B cell (primary cell): ENCODE measurements at regions of chr15 and their contacts with region 1.

Region 1: DNA sequence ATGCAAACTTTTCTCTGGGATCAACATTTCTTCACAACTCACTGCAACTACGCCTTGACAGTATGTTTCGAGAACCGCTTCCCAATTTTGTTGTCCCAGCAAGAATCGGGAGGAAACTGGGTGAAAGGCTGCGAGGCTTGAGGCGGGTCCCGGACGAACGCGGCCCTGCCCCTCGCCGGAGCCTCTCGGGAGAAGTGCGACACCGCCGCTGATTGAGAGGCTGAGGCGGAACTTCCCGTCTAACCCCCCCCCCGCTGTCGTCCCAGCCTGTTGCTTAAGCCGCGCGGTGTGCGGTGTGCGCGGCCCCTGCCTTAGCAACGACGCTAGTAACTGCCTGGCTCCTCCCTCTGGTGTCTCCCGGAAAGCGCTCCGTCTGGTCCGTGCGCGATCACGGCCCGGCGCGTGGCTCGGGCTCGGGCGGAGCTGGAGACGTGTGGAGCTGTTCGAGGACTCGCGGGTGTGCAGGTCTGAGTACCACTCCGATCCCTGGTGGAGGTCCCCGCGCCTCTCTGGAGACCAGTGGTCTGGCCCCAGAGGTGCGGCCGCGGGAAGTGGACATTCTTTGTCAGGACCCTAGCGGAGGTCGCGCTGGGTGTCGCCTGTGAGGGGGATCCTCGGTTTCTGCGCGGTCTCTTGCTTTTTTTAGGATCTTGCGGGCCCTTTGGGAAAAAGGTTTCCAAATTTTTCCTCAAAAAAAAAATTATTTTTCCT is at the starts of genes DTWD1 and FAM227B:
- DNase-seq: peak; percentile 96
- ATAC-seq: peak; percentile 98
- H3K4me3 ChIP-seq: peak within 1 kb of the TSS; percentile 75 to 91 (median 83)
- H3K4me3 Mint-ChIP-seq: peak within 1 kb of the TSS; percentile 93
- H3K27ac ChIP-seq: peak within 1 kb of the TSS; percentile 71 to 95
- H3K27ac Mint-ChIP-seq: peak within 1 kb of the TSS; percentile 96
- H3K4me1 ChIP-seq: peaks cover 11 to 18% of the 10 kb centered on the region in 2 donors
- H3K4me1 Mint-ChIP-seq: peaks cover 22% of the 10 kb centered on the region
- H3K27me3 ChIP-seq: no peaks in the 10 kb centered on the region
- H3K27me3 Mint-ChIP-seq: no peaks in the 10 kb centered on the region
- CTCF ChIP-seq: no peak
- total RNA-seq, gene DTWD1: 27.1 and 27.8 TPM in 2 replicates
- total RNA-seq, gene FAM227B: 8.9 and 9.2 TPM in 2 replicates

Region 2: GRCh38 chr15:48177766-48178647 is 1442.8 kb before region 1 on chr15 and contains the start of gene MYEF2:
- CTCF ChIA-PET with region 1: no interaction called
- POLR2A ChIA-PET with region 1: no interaction called
- intact Hi-C with region 1: loop called (anchors 5 kb)
- DNase-seq: peak; percentile 80
- ATAC-seq: peak; percentile 72
- H3K4me3 ChIP-seq: peak within 1 kb of the TSS; percentile 47 to 71 (median 67)
- H3K4me3 Mint-ChIP-seq: peak within 1 kb of the TSS; percentile 95
- H3K27ac ChIP-seq: peak within 1 kb of the TSS; percentile 21 to 81
- H3K27ac Mint-ChIP-seq: peak within 1 kb of the TSS; percentile 92
- H3K4me1 ChIP-seq: peaks cover 8 to 11% of the 10 kb centered on the region in 2 donors
- H3K4me1 Mint-ChIP-seq: peaks cover 18% of the 10 kb centered on the region
- H3K27me3 ChIP-seq: peaks cover 0 to 5% (median 2%) of the 10 kb centered on the region in 4 experiments
- H3K27me3 Mint-ChIP-seq: peaks cover 17% of the 10 kb centered on the region
- CTCF ChIP-seq: peak; percentile 35
- total RNA-seq, gene MYEF2: 34.3 and 36.3 TPM in 2 replicates

Region 3: GRCh38 chr15:48330855-48331795 is 1289.7 kb before region 1 on chr15 and contains the start of gene DUT:
- CTCF ChIA-PET with region 1: no interaction called
- POLR2A ChIA-PET with region 1: no interaction called
- intact Hi-C with region 1: loop called (anchors 2 kb)
- DNase-seq: peak; percentile 89
- ATAC-seq: peak; percentile 78
- H3K4me3 ChIP-seq: peak within 1 kb of the TSS; percentile 76 to 90 (median 77)
- H3K4me3 Mint-ChIP-seq: peak within 1 kb of the TSS; percentile 94
- H3K27ac ChIP-seq: peak within 1 kb of the TSS; percentile 83 to 90
- H3K27ac Mint-ChIP-seq: peak within 1 kb of the TSS; percentile 95
- H3K4me1 ChIP-seq: peaks cover 15 to 17% of the 10 kb centered on the region in 2 donors
- H3K4me1 Mint-ChIP-seq: peaks cover 25% of the 10 kb centered on the region
- H3K27me3 ChIP-seq: no peaks in the 10 kb centered on the region
- H3K27me3 Mint-ChIP-seq: no peaks in the 10 kb centered on the region
- CTCF ChIP-seq: no peak
- total RNA-seq, gene DUT: 84.7 and 89.8 TPM in 2 replicates

Region 4: DNA sequence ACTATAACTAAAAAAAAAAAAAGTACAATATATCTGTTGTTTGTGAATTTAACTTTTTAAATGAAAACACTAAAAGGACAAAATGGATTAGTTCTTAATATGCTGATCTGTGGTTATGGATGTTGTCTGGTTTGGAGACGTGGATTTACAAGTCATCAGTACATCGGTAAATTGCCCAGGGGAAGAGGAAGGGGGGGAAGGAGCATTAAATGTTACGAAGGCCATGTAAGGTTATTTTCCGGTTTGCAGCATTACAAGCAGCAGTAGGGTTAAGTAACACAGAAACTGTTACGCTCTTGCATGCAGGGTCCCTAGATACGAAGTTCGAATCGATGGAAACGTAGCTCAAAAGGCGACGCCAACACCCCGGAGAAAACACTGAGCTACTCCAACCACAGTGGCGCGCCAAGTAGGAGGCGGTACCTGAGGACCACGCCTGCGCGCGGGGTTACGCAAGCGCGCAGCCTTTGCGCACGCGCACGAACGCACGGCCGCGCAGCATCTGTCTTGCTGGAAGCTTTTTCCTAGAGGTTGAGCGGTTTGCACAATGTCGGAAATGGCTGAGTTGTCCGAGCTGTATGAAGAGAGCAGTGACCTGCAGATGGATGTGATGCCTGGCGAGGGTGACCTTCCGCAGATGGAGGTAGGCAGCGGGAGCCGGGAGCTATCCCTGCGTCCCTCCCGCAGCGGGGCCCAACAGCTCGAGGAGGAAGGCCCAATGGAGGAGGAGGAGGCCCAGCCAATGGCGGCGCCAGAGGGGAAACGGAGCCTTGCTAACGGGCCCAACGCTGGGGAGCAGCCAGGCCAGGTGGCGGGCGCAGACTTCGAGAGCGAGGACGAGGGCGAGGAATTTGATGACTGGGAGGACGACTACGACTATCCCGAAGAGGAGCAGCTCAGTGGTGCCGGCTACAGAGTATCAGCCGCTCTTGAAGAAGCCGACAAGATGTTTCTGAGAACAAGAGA is 742.9 kb before region 1 on chr15 and contains the start of gene EID1:
- CTCF ChIA-PET with region 1: no interaction called
- POLR2A ChIA-PET with region 1: interaction called, 3 read pairs
- intact Hi-C with region 1: loop called (anchors 5 kb)
- DNase-seq: peak; percentile 95
- ATAC-seq: peak; percentile 95
- H3K4me3 ChIP-seq: peak within 1 kb of the TSS; percentile 56 to 91 (median 82)
- H3K4me3 Mint-ChIP-seq: peak within 1 kb of the TSS; percentile 100
- H3K27ac ChIP-seq: peak within 1 kb of the TSS; percentile 79 to 83
- H3K27ac Mint-ChIP-seq: peak within 1 kb of the TSS; percentile 99
- H3K4me1 ChIP-seq: peaks cover 0 to 12% of the 10 kb centered on the region in 2 donors
- H3K4me1 Mint-ChIP-seq: peaks cover 25% of the 10 kb centered on the region
- H3K27me3 ChIP-seq: peaks cover 0 to 4% (median 1%) of the 10 kb centered on the region in 4 experiments
- H3K27me3 Mint-ChIP-seq: peaks cover 8% of the 10 kb centered on the region
- CTCF ChIP-seq: no peak
- total RNA-seq, gene EID1: 56.5 and 62.7 TPM in 2 replicates

Region 5: DNA sequence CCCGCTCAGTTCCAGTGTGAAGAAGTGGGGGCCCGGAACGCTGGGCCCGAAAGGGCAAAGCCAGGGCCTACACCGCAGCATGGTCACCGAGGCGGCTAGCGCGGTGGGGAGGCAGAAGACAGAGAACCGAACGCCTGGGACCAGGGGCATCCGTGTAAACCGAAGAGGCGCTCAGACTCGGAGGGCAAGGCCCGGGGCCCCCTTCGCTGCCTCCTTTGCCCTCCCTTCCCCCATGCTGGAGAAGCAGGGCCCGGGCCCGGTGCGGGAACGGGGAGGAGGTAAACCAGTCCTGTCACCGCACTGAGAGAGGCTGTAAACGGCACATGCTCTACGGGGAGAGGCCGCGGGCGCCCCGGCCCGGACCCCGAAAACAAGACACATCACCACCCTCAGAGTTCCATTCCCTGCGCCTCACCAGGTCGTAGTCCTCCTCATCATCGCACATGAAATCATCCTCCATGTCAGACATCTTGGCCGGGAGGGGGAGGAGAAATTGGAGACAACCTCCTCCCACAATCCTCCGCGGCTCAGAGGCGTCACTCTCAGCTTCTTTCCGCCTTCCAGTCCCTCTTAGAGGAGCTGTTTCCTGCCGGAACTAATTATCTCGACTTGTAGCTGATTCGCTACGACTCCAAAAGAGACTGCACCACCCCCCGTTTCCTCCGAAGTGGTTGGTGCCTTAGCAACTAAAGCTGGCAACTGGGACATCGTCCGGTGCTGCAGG is 465.5 kb before region 1 on chr15 and contains the start of gene COPS2:
- CTCF ChIA-PET with region 1: no interaction called
- POLR2A ChIA-PET with region 1: interaction called, 6 read pairs
- intact Hi-C with region 1: loop called (anchors 1 kb)
- DNase-seq: peak; percentile 97
- ATAC-seq: peak; percentile 93
- H3K4me3 ChIP-seq: peak within 1 kb of the TSS; percentile 80 to 99 (median 90)
- H3K4me3 Mint-ChIP-seq: peak within 1 kb of the TSS; percentile 98
- H3K27ac ChIP-seq: peak within 1 kb of the TSS; percentile 92 to 94
- H3K27ac Mint-ChIP-seq: peak within 1 kb of the TSS; percentile 96
- H3K4me1 ChIP-seq: peaks cover 11 to 25% of the 10 kb centered on the region in 2 donors
- H3K4me1 Mint-ChIP-seq: peaks cover 41% of the 10 kb centered on the region
- H3K27me3 ChIP-seq: no peaks in the 10 kb centered on the region
- H3K27me3 Mint-ChIP-seq: no peaks in the 10 kb centered on the region
- CTCF ChIP-seq: peak; percentile 9
- total RNA-seq, gene COPS2: 44.5 and 47.8 TPM in 2 replicates

Region 6: DNA sequence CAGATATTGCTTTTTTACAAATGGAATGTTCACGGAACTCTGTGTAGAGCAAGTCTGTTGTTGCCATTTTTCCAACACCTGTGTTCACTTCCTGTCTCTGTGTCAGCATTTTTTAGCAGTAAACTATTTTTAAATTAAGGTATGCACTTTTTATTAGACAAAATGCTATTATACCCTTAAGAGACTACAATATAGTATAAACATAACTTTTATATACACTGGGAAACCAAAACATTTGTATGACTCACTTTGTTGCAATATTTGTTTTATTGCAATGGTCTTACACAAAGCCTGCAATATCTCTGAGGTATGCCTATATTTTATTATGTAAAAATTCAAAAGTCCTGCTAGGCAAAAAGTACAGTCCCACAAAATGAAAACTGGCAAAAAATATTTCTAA is 237.5 kb before region 1 on chr15:
- CTCF ChIA-PET with region 1: no interaction called
- POLR2A ChIA-PET with region 1: no interaction called
- intact Hi-C with region 1: no loop called
- DNase-seq: no peak
- ATAC-seq: no peak
- H3K4me3 ChIP-seq: no peak overlapping the region
- H3K4me3 Mint-ChIP-seq: no peak overlapping the region
- H3K27ac ChIP-seq: no peak overlapping the region
- H3K27ac Mint-ChIP-seq: no peak overlapping the region
- H3K4me1 ChIP-seq: no peaks in the 10 kb centered on the region
- H3K4me1 Mint-ChIP-seq: no peaks in the 10 kb centered on the region
- H3K27me3 ChIP-seq: no peaks in the 10 kb centered on the region
- H3K27me3 Mint-ChIP-seq: peaks cover 8% of the 10 kb centered on the region
- CTCF ChIP-seq: no peak

Region 7: GRCh38 chr15:49606580-49606979 is 14.2 kb before region 1 on chr15:
- CTCF ChIA-PET with region 1: no interaction called
- POLR2A ChIA-PET with region 1: no interaction called
- intact Hi-C with region 1: no loop called
- DNase-seq: no peak
- ATAC-seq: no peak
- H3K4me3 ChIP-seq: no peak overlapping the region
- H3K4me3 Mint-ChIP-seq: no peak overlapping the region
- H3K27ac ChIP-seq: no peak overlapping the region
- H3K27ac Mint-ChIP-seq: no peak overlapping the region
- H3K4me1 ChIP-seq: no peaks in the 10 kb centered on the region
- H3K4me1 Mint-ChIP-seq: no peaks in the 10 kb centered on the region
- H3K27me3 ChIP-seq: no peaks in the 10 kb centered on the region
- H3K27me3 Mint-ChIP-seq: no peaks in the 10 kb centered on the region
- CTCF ChIP-seq: no peak

Region 8: DNA sequence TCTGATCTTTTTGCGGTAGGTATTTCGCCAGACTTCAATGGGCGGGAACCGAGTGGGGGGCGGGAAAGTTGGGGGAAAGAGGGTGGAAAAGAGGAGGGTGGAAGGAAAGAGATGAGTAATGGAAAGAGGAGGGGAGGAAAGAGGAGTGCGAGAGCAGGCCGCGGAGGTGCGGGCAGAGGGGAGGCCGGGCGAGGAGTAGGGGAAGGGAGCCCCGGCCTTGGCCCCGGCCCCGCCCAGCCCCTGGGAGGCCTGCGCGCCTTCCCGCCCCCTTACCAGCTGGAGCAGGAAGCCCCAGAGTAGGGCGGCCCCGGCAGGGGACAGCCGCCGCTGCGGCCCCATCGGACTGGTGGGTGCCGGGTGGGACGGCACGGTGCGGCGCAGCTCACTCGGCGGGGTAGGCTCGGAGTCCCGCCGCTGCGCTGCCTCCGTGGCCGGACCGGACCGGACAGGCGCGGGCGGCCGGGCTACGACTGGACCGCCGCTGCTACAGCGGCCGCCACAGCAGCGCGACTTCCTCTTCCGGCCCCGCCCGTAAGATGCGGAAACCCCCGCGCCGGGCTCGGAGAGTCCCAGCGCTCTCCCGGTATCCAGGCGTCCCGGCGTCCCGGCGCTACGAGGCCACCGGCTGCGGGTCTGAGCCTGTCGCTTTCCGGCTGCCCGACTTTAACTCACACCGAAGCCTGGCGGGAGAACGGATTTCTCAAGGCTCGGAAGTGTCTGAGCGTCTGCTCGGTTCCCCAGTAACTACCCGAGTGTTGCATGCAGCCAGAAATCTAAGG is 1144.6 kb after region 1 on chr15 and contains the start of gene SPPL2A:
- CTCF ChIA-PET with region 1: no interaction called
- POLR2A ChIA-PET with region 1: no interaction called
- intact Hi-C with region 1: loop called (anchors 2 kb)
- DNase-seq: peak; percentile 91
- ATAC-seq: peak; percentile 94
- H3K4me3 ChIP-seq: peak within 1 kb of the TSS; percentile 84 to 98 (median 93)
- H3K4me3 Mint-ChIP-seq: peak within 1 kb of the TSS; percentile 88
- H3K27ac ChIP-seq: peak within 1 kb of the TSS; percentile 91
- H3K27ac Mint-ChIP-seq: peak within 1 kb of the TSS; percentile 93
- H3K4me1 ChIP-seq: peaks cover 17 to 23% of the 10 kb centered on the region in 2 donors
- H3K4me1 Mint-ChIP-seq: peaks cover 39% of the 10 kb centered on the region
- H3K27me3 ChIP-seq: no peaks in the 10 kb centered on the region
- H3K27me3 Mint-ChIP-seq: no peaks in the 10 kb centered on the region
- CTCF ChIP-seq: no peak
- total RNA-seq, gene SPPL2A: 78.3 and 78.4 TPM in 2 replicates